ENCODE measurements at regions of chr11 and their contacts with region 1.

Region 1: DNA sequence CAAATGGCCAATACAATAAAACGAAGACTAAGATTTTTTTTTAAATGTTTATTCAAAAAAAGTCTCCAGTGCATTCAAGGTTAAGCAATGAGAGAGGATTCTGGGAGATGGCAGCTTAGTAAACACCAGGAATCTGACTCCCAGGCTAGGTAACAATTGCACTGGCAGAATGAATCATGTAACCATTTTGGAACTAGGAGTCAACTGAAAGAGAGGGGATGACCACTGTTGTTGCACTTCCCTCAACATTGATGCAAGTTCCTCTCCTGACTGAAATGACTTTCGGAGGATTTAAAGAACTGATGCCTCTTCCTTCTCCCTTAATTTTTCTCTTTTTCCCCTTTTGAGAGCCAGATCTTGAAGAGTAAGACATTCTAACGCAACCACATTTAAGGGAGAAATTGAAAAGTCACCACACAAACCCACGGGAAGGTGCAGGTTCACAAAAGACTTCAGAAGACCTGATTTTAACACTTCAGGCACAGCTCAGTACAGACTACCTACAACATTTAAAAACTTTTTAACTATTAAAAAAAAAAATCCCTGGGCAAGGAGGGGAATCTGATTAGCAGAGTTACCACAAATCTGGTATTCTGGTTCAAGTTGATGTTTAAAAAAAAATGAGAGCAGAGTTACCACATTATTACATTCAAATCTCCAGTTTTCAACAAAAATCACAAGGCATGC is 56.8 kb downstream of the FCHSD2 start:
- DNase-seq: peak; percentile 37
- ATAC-seq: peak; percentile 25
- H3K4me3 ChIP-seq: no peak overlapping the region
- H3K4me3 Mint-ChIP-seq: peak overlapping the region; percentile 44
- H3K27ac ChIP-seq: peak overlapping the region; percentile 42 to 79
- H3K27ac Mint-ChIP-seq: peak overlapping the region; percentile 70
- H3K4me1 ChIP-seq: peaks cover 24 to 38% of the 10 kb centered on the region in 2 donors
- H3K4me1 Mint-ChIP-seq: peaks cover 46% of the 10 kb centered on the region
- H3K27me3 ChIP-seq: no peaks in the 10 kb centered on the region
- H3K27me3 Mint-ChIP-seq: no peaks in the 10 kb centered on the region
- CTCF ChIP-seq: no peak

Region 2: DNA sequence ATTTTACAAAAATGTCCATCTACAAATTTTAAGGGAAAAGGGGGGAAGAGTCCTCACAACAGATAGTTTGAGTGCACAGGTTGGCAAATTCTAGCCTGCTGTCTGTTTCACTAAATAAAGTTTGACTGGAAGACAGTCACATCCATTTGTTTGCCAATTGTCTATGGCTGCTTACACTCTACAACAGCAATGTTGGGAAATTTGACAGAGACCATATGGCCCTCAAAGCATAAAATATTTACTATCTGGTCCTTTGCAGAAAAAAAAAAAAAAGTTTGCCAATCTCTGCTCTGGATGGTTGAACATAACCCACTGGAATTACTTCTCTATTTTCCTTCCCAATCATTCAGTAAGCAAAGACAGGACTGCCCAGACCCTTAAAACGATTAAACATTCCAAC is 31.4 kb before region 1 on chr11:
- CTCF ChIA-PET with region 1: no interaction called
- POLR2A ChIA-PET with region 1: no interaction called
- intact Hi-C with region 1: loop called (anchors 5 kb)
- DNase-seq: no peak
- ATAC-seq: no peak
- H3K4me3 ChIP-seq: no peak overlapping the region
- H3K4me3 Mint-ChIP-seq: no peak overlapping the region
- H3K27ac ChIP-seq: peak overlapping the region in 1 of 2 donors; percentile 81
- H3K27ac Mint-ChIP-seq: peak overlapping the region; percentile 78
- H3K4me1 ChIP-seq: peaks cover 55 to 81% of the 10 kb centered on the region in 2 donors
- H3K4me1 Mint-ChIP-seq: peaks cover 65% of the 10 kb centered on the region
- H3K27me3 ChIP-seq: no peaks in the 10 kb centered on the region
- H3K27me3 Mint-ChIP-seq: no peaks in the 10 kb centered on the region
- CTCF ChIP-seq: no peak

Region 3: DNA sequence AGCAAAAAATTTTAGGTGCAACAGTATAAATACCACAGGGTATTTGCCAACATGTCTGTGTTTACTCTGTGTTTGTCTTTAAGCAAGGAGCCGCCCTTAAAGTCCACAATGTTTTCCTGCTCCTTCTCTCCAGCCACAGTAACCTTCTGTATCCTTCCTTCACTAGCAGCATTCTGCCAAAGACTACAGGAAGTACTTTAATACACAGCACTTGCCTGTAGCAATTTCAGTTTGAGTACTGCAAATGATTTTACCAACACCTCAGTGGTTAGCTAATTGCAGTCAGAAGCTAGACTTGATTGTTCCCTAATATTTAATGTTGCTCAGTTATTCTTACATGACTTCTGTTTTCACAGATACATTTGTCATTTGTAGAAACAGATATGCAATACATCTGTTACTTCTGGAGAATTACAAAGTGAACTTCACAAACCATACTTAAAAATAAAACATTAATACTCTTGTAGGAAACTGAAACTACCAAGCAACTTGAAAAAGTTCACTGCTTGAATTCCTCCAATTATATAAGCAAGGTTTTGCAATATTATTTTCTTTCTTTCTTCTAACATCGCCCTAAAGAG is 12.3 kb before region 1 on chr11:
- CTCF ChIA-PET with region 1: interaction called, 4 read pairs
- POLR2A ChIA-PET with region 1: interaction called, 3 read pairs
- intact Hi-C with region 1: loop called (anchors 2 kb)
- DNase-seq: peak; percentile 47
- ATAC-seq: peak; percentile 39
- H3K4me3 ChIP-seq: peak overlapping the region in 3 of 5 experiments; percentile 1 to 46 (median 13)
- H3K4me3 Mint-ChIP-seq: peak overlapping the region; percentile 78
- H3K27ac ChIP-seq: peak overlapping the region; percentile 49 to 83
- H3K27ac Mint-ChIP-seq: peak overlapping the region; percentile 79
- H3K4me1 ChIP-seq: peaks cover 37 to 53% of the 10 kb centered on the region in 2 donors
- H3K4me1 Mint-ChIP-seq: peaks cover 60% of the 10 kb centered on the region
- H3K27me3 ChIP-seq: no peaks in the 10 kb centered on the region
- H3K27me3 Mint-ChIP-seq: no peaks in the 10 kb centered on the region
- CTCF ChIP-seq: no peak

Region 4: DNA sequence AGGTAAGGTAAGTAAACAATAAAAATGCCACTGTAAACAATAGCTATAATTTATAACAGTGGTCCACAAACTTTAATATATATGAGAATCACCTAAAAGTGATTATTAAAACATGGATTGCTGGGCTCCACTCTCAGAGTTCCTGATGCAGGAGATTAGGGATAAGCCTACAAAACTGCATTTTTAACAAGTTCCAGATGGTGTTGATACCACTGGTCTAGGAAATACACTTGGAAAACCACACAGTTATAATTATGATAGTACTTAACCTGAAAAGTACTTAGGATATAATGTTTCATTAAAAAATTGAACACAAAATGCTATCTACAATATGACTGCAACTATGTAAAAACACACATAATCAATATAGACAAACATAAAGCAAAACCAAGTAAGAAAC is 36.4 kb after region 1 on chr11:
- CTCF ChIA-PET with region 1: no interaction called
- POLR2A ChIA-PET with region 1: interaction called, 5 read pairs
- intact Hi-C with region 1: loop called (anchors 5 kb)
- DNase-seq: no peak
- ATAC-seq: no peak
- H3K4me3 ChIP-seq: no peak overlapping the region
- H3K4me3 Mint-ChIP-seq: no peak overlapping the region
- H3K27ac ChIP-seq: peak overlapping the region in 1 of 2 donors; percentile 60
- H3K27ac Mint-ChIP-seq: no peak overlapping the region
- H3K4me1 ChIP-seq: peaks cover 29 to 54% of the 10 kb centered on the region in 2 donors
- H3K4me1 Mint-ChIP-seq: peaks cover 49% of the 10 kb centered on the region
- H3K27me3 ChIP-seq: no peaks in the 10 kb centered on the region
- H3K27me3 Mint-ChIP-seq: no peaks in the 10 kb centered on the region
- CTCF ChIP-seq: no peak